Psoas muscle (tissue), 8 donors: ENCODE measurements at regions of chr17 and their contacts with region 1.

Region 1: GRCh38 chr17:1865252-1866037 is 35.6 kb downstream of the RPA1 start:
- DNase-seq: no peak
- ATAC-seq: peak in 2 of 4 donors; percentile 38 to 44
- H3K4me3 ChIP-seq: no peak overlapping the region
- H3K27ac ChIP-seq: peak overlapping the region; percentile 50
- H3K4me1 ChIP-seq: peaks cover 29% of the 10 kb centered on the region
- H3K27me3 ChIP-seq: no peaks in the 10 kb centered on the region
- CTCF ChIP-seq: peak; percentile 77

Region 2: GRCh38 chr17:1673041-1673785 is 192.2 kb before region 1 on chr17:
- intact Hi-C with region 1: loop called in 1 of 2 experiments (anchors 2 kb)
- DNase-seq: peak in 1 of 2 donors; percentile 32
- ATAC-seq: no peak
- H3K4me3 ChIP-seq: no peak overlapping the region
- H3K27ac ChIP-seq: no peak overlapping the region
- H3K4me1 ChIP-seq: peaks cover 10% of the 10 kb centered on the region
- H3K27me3 ChIP-seq: no peaks in the 10 kb centered on the region
- CTCF ChIP-seq: no peak

Region 3: DNA sequence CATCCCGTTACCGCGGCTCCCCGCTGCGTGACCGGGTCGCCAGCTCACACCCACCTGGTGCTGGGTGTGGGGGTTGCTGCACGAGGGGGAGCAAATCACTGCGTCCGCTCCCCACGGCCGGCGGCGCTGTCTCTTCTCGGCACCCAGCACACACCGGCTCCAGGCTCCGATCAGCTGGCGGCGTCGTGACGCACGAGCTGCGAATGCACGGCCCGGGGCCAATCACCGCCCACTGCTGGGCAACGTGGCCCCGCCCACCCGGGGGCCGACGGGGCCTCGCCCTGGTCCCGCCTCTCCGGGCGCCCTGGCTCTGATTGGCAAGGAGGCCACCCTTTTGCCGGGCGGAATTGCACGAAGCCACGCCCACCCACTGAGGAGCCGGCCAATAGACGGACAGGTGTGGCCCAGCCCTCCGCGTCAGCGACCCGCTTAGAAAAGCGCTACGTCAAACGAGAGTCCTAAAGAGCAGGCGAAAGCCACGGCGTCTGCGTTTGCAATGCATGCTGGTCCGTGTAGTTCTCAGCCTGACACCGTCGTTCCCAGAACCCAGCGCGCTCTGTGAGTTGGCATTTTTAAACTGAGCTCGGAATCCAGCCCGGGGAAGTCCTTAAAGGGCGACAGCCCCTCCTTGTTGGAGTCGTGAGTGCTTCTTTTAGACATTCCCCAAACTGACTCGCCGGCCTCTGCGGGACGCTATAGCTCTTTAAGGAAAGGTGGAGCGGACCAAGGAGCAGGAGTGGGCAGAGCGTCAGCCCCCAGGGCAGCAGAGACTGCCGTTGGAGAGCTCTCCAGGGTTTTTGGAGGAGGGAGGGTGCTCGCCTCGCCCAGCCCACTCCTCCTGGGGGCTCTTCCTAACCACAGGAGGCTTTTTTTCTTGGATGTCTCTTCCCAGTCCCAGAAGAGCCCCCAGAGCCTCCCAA is 149.1 kb before region 1 on chr17:
- intact Hi-C with region 1: loop called in 1 of 2 experiments (anchors 5 kb)
- DNase-seq: peak; percentile 100
- ATAC-seq: peak; percentile 59 to 62 (median 62)
- H3K4me3 ChIP-seq: peak overlapping the region; percentile 97
- H3K27ac ChIP-seq: peak overlapping the region; percentile 100
- H3K4me1 ChIP-seq: peaks cover 55% of the 10 kb centered on the region
- H3K27me3 ChIP-seq: no peaks in the 10 kb centered on the region
- CTCF ChIP-seq: no peak

Region 4: GRCh38 chr17:1724506-1725362 is 140.7 kb before region 1 on chr17 and contains the start of gene WDR81:
- intact Hi-C with region 1: loop called (anchors 5 kb)
- DNase-seq: peak; percentile 95 to 97
- ATAC-seq: peak; percentile 72 to 86 (median 81)
- H3K4me3 ChIP-seq: peak within 1 kb of the TSS; percentile 82
- H3K27ac ChIP-seq: peak within 1 kb of the TSS; percentile 94
- H3K4me1 ChIP-seq: peaks cover 57% of the 10 kb centered on the region
- H3K27me3 ChIP-seq: no peaks in the 10 kb centered on the region
- CTCF ChIP-seq: peak; percentile 15
- total RNA-seq, gene WDR81: 15.1 to 23.7 (median 20.8) TPM

Region 5: DNA sequence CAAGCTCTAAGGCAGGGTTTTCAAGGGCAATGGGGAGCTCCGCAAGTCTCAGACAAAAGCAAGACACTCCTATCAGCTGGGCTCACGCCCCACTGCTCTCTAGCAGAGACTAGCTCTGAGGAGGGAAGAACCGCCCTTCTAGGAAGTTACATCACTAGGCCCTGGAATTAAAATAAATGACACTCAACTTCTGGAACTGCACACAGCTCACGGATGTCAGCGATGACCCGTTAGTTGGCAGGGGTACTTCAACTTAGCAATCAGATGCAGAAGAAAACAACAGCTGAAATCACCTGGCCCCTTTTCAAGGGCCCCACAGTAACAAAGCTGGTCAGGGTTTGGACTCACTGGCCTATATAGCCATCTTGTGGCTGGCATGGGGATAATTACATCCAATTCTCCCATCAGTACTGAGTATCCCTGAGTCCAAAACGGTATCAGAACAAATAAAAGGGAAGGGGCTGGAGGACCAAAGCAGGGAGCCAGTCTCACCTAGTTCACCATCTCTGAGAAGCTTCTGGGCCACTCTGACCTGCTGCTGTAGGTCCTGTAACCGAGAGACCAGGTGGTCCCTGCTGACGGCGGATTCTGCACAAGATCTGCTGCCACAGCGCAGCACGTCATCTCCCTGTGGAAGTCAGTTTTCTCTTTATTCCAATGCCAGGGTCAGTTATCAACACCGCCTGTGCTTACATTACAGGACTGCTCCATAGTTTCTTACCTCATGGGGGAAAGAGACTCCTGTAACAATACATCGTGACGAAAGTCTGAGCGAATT is 81.4 kb before region 1 on chr17:
- intact Hi-C with region 1: loop called (anchors 5 to 10 kb)
- DNase-seq: peak; percentile 87 to 93
- ATAC-seq: peak; percentile 84 to 85 (median 85)
- H3K4me3 ChIP-seq: peak overlapping the region; percentile 58
- H3K27ac ChIP-seq: peak overlapping the region; percentile 99
- H3K4me1 ChIP-seq: peaks cover 72% of the 10 kb centered on the region
- H3K27me3 ChIP-seq: no peaks in the 10 kb centered on the region
- CTCF ChIP-seq: peak; percentile 82

Region 6: GRCh38 chr17:1829592-1830257 is 35.7 kb before region 1 on chr17 and contains the starts of genes RPA1 and SMYD4:
- intact Hi-C with region 1: loop called in 1 of 2 experiments (anchors 5 kb)
- DNase-seq: peak; percentile 92 to 94
- ATAC-seq: peak; percentile 97 to 99 (median 98)
- H3K4me3 ChIP-seq: peak within 1 kb of the TSS; percentile 83
- H3K27ac ChIP-seq: peak within 1 kb of the TSS; percentile 93
- H3K4me1 ChIP-seq: peaks cover 30% of the 10 kb centered on the region
- H3K27me3 ChIP-seq: no peaks in the 10 kb centered on the region
- CTCF ChIP-seq: no peak
- total RNA-seq, gene RPA1: 52.6 to 82.1 (median 75.2) TPM
- total RNA-seq, gene SMYD4: 8.8 to 18.0 (median 12.7) TPM